Calu3 (cell line): ENCODE measurements at regions of chr22 and their contacts with region 1.

Region 1: GRCh38 chr22:46829941-46830715 is 67.7 kb downstream of the TBC1D22A start:
- DNase-seq: peak; percentile 69
- H3K4me3 Mint-ChIP-seq: peak overlapping the region; percentile 64
- H3K27ac Mint-ChIP-seq: peak overlapping the region; percentile 95
- H3K4me1 Mint-ChIP-seq: peaks cover 43% of the 10 kb centered on the region
- H3K27me3 Mint-ChIP-seq: no peaks in the 10 kb centered on the region
- CTCF ChIP-seq: no peak

Region 2: DNA sequence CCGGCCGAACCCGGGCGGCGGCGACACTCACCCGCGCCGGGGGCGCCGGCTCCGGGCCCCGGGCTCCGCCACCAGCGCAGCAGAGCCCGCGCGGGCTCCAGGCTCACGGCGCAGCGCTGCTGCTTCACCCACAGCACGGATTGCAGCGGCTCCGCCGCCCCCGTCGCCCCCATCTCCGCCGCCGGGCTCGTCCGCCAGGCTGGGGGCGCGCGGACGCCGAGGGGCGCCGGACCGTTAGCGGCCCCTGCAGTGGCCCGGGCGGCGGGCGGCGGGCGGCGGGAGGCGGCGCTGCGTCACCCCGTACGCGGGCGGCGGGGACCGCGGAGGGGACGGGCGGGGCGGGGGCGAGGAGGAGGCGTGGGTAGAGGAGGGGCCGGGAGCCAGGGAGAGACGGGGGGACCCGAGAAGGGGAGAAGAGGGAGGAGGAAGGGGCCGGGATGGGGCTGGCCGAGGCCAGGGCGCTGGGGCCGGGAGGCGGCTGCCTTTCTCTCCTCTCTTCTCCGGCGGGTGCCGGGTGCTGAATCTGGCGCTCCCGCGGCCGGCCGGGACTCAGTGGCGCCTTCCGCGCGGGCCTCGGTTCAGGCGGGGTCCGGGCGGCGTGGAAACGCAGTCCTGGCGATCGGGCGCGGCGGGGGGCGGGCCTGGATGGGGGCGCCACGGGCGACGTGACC is 92.0 kb before region 1 on chr22 and contains the start of gene CERK:
- CTCF ChIA-PET with region 1: no interaction called
- intact Hi-C with region 1: no loop called
- DNase-seq: peak; percentile 70
- H3K4me3 Mint-ChIP-seq: peak within 1 kb of the TSS; percentile 83
- H3K27ac Mint-ChIP-seq: peak within 1 kb of the TSS; percentile 30
- H3K4me1 Mint-ChIP-seq: peaks cover 36% of the 10 kb centered on the region
- H3K27me3 Mint-ChIP-seq: no peaks in the 10 kb centered on the region
- CTCF ChIP-seq: peak; percentile 14
- total RNA-seq, gene CERK: 20.3 and 25.0 TPM in 2 replicates

Region 3: DNA sequence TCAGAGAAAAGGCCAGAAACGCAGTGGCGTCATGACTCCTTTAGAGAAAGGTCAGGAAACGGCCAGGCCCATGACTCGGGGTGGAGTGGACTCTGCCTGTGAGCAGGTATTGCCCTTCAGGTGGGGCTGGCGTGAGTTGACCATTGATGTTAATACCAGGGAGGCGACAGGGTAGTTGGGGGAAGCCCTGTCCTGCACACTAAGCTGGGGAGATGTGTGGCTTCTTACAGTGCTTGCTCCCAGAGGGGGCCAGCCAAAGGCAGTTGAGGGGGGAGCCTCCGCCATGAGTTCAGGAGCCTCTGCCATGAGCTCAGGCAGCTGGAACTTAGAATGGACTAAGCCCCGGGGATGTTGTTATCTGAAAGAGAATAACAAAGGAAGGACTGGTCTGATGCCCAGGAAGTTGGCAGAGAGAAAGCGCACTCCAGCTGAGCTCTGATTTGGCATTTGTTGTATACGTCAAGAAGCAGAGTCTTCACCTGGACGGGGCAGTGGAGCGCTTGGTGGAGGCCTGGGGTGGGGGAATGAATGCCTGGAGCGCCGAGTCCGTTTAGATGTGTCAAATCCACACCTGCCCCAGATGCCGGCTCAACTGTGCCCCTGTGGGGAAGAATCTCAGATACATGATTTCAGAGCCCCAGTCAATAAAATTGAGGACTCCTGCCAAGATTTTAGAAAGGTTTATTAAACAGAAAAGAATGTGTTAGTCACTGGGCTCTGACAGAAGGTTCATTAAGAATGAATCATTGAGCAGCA is 154.8 kb after region 1 on chr22:
- CTCF ChIA-PET with region 1: no interaction called
- intact Hi-C with region 1: loop called (anchors 10 kb)
- DNase-seq: peak; percentile 59
- H3K4me3 Mint-ChIP-seq: peak overlapping the region; percentile 12
- H3K27ac Mint-ChIP-seq: peak overlapping the region; percentile 25
- H3K4me1 Mint-ChIP-seq: peaks cover 17% of the 10 kb centered on the region
- H3K27me3 Mint-ChIP-seq: no peaks in the 10 kb centered on the region
- CTCF ChIP-seq: no peak

Region 4: GRCh38 chr22:47129902-47130635 is 299.9 kb after region 1 on chr22:
- CTCF ChIA-PET with region 1: no interaction called
- intact Hi-C with region 1: no loop called
- DNase-seq: peak; percentile 86
- H3K4me3 Mint-ChIP-seq: peak overlapping the region; percentile 60
- H3K27ac Mint-ChIP-seq: peak overlapping the region; percentile 98
- H3K4me1 Mint-ChIP-seq: peaks cover 16% of the 10 kb centered on the region
- H3K27me3 Mint-ChIP-seq: no peaks in the 10 kb centered on the region
- CTCF ChIP-seq: no peak